Activated CD4-positive, alpha-beta memory T cell treated with anti-CD3 and anti-CD28 coated beads for 36 hours (primary cell): ENCODE measurements at regions of chrX and their contacts with region 1.

Region 1: DNA sequence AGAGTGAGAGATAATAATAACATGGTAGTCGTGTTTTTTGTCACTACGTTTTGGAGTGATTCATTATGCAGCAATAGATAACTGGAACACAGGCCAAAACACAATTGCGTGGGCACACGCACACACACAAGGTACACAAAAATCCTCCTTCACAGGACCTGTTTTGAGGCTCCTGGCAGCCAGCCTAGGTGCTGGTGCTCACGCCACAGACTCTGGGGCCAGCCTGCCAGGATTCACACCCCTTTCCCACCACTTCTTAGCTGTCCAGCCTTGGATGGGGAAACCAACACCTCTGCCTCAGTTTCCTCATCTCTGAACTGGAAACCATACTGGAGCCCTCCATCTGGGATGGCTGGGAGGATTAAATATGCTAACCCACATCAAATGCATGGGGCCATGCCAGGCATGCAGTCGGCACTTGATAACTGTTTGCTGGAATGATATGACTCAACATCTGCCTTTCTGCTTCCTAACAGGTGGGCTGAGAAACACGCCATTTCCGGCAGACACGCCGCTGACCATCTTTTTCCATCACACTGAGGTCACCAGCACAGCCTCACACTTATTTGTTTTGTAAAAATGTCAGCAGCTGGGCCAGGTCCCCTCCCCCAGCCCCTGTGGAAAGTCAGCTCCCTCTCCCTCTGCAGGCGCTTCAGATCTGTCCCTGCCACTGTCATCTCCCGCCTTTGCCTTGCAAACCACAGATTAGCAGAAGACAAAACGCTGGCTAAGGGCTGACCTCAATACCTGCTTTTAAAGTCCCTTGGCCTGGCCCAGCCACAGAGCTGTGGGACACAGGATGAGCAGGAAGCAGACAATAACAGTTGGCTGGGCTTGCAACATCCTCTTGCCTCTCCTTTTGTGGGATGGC is 237.5 kb downstream of the BCOR start:
- DNase-seq: peak; percentile 94
- H3K4me3 Mint-ChIP-seq: peak overlapping the region; percentile 29
- H3K27ac Mint-ChIP-seq: peak overlapping the region; percentile 98
- H3K4me1 Mint-ChIP-seq: peaks cover 55% of the 10 kb centered on the region
- H3K27me3 Mint-ChIP-seq: no peaks in the 10 kb centered on the region

Region 2: GRCh38 chrX:39073131-39073530 is 787.1 kb before region 1 on chrX:
- CTCF ChIA-PET with region 1: no interaction called
- POLR2A ChIA-PET with region 1: no interaction called
- intact Hi-C with region 1: no loop called
- DNase-seq: no peak
- H3K4me3 Mint-ChIP-seq: no peak overlapping the region
- H3K27ac Mint-ChIP-seq: no peak overlapping the region
- H3K4me1 Mint-ChIP-seq: no peaks in the 10 kb centered on the region
- H3K27me3 Mint-ChIP-seq: peaks cover 5% of the 10 kb centered on the region

Region 3: DNA sequence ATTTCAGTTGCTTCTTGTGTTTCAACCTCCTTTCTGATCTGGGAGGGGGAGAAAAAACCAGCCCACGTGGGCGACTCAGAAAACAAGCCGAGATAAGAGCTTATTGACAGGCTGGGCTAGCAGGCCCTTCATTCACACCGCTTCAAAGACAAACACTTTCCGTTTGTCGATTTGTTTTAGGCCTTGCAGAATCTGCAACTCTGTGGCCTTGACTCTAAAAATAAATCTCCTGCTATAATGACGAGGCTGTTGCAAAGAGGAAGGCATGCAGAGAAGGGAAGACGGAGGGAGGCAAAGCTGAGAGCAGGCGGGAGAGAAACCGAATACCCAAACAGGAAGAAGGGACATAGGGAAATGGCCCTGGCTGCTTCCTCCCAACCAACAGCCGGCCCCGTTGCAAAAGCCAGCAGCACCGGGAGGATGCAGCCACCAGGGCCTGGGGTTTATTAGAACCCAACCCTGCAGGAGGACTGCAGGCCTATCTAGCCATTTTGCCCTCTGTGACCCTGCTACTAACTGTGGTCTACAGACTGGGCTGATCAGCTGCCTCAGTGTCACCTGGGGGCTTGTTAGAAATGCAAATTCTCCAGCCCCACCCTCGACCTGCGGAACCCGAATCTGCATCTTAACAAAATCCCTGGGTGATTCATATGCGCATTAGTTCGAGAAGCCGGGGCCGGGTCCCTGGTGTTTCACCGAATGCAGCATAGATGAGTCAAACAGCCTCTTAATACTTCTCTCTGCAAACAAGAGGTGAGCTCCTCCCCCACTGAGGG is 88.0 kb before region 1 on chrX:
- CTCF ChIA-PET with region 1: no interaction called
- POLR2A ChIA-PET with region 1: interaction called, 3 read pairs
- intact Hi-C with region 1: loop called (anchors 1 kb)
- DNase-seq: peak; percentile 86
- H3K4me3 Mint-ChIP-seq: peak overlapping the region; percentile 55
- H3K27ac Mint-ChIP-seq: peak overlapping the region; percentile 98
- H3K4me1 Mint-ChIP-seq: peaks cover 48% of the 10 kb centered on the region
- H3K27me3 Mint-ChIP-seq: no peaks in the 10 kb centered on the region

Region 4: DNA sequence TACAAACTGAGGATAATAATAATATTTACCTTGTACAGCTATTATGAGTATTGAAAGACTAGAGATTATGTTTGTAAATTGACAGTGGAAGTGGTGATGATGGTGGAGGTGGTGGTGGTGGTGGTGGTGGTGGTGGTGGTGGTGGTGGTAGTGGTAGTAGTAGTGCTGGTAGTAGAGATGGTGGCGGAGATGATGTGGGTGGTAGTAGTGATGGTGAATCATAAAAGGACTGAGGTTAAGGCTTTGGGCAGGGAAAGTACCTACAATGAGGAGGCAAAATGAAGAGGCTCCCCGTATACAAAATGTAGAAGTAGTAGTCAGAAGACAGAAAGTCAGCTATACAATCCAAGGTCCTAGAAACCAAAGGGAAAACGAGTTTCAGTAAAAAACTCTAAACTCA is 23.4 kb after region 1 on chrX:
- CTCF ChIA-PET with region 1: interaction called, 3 read pairs
- POLR2A ChIA-PET with region 1: interaction called, 12 read pairs
- intact Hi-C with region 1: loop called (anchors 1 kb)
- DNase-seq: peak; percentile 72
- H3K4me3 Mint-ChIP-seq: no peak overlapping the region
- H3K27ac Mint-ChIP-seq: peak overlapping the region; percentile 71
- H3K4me1 Mint-ChIP-seq: peaks cover 21% of the 10 kb centered on the region
- H3K27me3 Mint-ChIP-seq: peaks cover under 1% of the 10 kb centered on the region

Region 5: DNA sequence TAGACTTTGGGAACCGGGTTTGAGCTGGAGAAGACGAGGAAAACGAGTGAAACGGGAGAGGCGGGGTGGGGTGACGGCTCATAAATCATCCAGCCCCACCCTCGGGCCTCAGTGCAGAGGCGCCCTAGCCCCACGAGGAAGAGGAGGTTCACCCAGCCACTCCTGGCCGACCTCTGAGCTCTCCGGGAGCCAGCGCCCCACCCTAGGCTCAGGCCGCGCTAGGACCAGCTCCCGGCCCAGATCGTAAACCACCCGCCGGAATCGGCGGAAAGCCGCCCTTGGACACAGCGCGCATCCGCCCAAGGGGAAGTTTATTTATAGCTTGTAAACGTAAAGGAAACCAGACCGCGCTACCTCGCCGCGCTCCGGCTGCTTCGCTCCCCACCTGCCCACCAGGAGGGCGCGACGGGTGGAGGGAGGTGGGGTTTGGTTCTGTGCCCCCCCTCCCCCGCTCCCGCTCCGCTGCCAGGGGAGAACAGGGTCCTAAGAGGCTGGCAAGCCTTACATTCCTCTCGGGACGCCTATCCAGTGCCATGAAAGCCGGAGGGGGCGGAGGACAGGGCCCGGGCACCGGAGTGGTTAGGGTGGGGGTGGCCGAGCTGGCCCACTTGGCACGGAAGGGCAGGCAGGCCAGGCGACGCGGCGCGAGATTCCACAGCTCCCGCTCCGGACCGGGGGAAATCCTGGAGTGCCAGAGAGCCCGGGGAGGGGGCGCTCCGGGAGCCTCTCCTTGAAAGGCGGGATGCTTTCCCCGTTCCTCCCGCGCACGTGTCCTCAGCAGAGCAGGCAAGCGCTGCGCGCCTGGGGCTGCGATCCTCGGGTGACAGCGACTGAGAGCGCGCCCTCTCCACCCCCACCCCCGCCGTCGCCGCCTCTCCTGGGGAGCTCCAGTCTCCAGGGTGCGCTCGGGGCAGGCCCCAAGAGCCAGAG is 153.3 kb after region 1 on chrX:
- CTCF ChIA-PET with region 1: interaction called, 3 read pairs
- POLR2A ChIA-PET with region 1: interaction called, 5 read pairs
- intact Hi-C with region 1: loop called (anchors 2 kb)
- DNase-seq: peak; percentile 53
- H3K4me3 Mint-ChIP-seq: peak overlapping the region; percentile 71
- H3K27ac Mint-ChIP-seq: peak overlapping the region; percentile 66
- H3K4me1 Mint-ChIP-seq: peaks cover 18% of the 10 kb centered on the region
- H3K27me3 Mint-ChIP-seq: peaks cover 17% of the 10 kb centered on the region

Region 6: DNA sequence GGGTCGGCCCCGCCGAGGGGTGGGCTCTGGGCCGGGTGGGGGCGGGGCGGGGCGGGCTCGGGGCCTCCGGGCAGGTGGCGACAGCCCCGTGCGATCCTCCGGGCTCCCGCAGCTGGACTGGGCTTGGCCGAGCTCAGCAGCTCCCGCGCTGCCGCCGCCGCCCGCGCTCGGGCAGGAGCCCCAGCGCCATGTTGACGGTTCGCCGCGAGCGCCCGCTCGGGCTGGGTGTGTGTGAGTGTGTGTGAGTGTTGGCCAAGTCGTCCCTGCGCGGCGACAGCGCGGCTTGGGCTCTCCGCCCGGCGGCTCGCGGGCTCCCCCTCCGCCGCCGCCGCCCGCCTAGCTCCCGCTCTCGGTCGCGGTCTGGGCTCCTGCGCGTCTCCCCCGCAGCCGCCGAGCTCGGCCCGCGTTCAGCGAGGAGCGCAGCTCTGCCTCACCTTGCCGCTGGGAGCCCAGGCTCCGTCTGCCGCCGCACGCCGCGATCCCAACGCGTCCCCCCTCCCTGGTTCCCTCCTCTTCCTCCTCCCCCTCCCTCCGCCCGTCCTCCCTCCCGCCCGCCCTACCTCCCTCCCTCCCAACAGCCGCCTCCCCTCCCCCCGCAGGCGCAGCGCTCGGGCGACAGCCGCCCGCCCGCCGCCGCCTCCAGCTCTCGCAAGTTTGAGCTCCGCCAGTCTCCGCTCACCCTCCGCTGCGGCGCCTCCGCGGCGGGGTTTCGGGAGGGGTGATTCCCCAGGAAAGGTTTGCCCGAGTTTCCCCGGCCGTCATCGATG is 237.5 kb after region 1 on chrX and contains the start of gene BCOR:
- CTCF ChIA-PET with region 1: interaction called, 3 read pairs
- POLR2A ChIA-PET with region 1: interaction called, 9 read pairs
- intact Hi-C with region 1: loop called (anchors 5 kb)
- DNase-seq: peak; percentile 82
- H3K4me3 Mint-ChIP-seq: peak within 1 kb of the TSS; percentile 81
- H3K27ac Mint-ChIP-seq: peak within 1 kb of the TSS; percentile 86
- H3K4me1 Mint-ChIP-seq: peaks cover 22% of the 10 kb centered on the region
- H3K27me3 Mint-ChIP-seq: no peaks in the 10 kb centered on the region
- total RNA-seq, gene BCOR: 33.7 to 35.0 TPM